H1 (cell line): ENCODE measurements at regions of chrX and their contacts with region 1.

Region 1: DNA sequence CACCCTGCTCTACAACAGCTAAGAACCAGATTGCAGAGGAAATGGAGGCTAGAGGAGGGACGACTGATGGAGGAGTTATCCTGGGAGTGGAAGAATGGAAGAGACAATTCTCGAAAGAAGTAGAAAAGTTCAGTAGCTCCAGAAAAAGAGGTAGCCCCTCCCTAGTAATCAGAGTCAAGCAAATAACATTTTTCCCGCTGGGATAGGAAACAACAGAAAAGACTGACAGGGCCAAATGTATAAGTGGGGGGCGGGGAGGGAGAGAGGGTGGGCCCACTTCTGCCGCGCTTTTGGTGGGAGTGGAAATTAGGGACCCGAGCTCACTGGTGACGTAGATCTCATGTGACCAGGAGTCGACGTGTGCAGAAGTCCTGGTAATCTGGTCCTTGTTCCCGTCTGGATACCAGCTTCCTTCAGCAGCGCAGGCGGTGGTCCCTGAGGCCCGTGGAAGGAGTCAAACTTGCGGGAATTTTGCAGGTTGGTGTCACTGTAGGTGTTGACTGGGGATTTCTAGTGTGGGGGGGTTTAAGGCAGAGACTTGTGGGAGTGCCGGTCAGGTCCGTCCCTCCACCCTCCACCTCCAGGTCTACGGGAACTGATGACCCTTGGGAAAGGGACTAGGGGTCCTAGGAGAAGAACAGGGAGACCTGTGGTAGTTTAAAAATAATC is at the start of gene TCEAL9:
- DNase-seq: no peak
- H3K4me3 ChIP-seq: peak within 1 kb of the TSS; percentile 72 to 94 (median 81)
- H3K27ac ChIP-seq: peak within 1 kb of the TSS; percentile 70; the same call in 1 of the 2 replicates
- H3K4me1 ChIP-seq: no peaks in the 10 kb centered on the region
- H3K27me3 ChIP-seq: no peaks in the 10 kb centered on the region
- CTCF ChIP-seq: no peak
- EP300 ChIP-seq: no peak
- POLR2A ChIP-seq: peak; percentile 53 to 69
- RAD21 ChIP-seq: no peak
- total RNA-seq, gene TCEAL9: 36.5 and 36.8 TPM in 2 replicates

Region 2: GRCh38 chrX:103240155-103240554 is 116.1 kb before region 1 on chrX:
- CTCF ChIA-PET with region 1: no interaction called
- POLR2A ChIA-PET with region 1: no interaction called
- DNase-seq: no peak
- H3K4me3 ChIP-seq: no peak overlapping the region
- H3K27ac ChIP-seq: no peak overlapping the region
- H3K4me1 ChIP-seq: no peaks in the 10 kb centered on the region
- H3K27me3 ChIP-seq: no peaks in the 10 kb centered on the region
- CTCF ChIP-seq: no peak
- EP300 ChIP-seq: no peak
- POLR2A ChIP-seq: no peak
- RAD21 ChIP-seq: no peak

Region 3: GRCh38 chrX:103343105-103343504 is 13.2 kb before region 1 on chrX:
- CTCF ChIA-PET with region 1: no interaction called
- POLR2A ChIA-PET with region 1: interaction called, 12 read pairs
- DNase-seq: no peak
- H3K4me3 ChIP-seq: no peak overlapping the region
- H3K27ac ChIP-seq: no peak overlapping the region
- H3K4me1 ChIP-seq: no peaks in the 10 kb centered on the region; a peak in 3 of 7 replicates
- H3K27me3 ChIP-seq: no peaks in the 10 kb centered on the region
- CTCF ChIP-seq: peak in 2 of 3 experiments; percentile 29 to 52; a peak in 2 of 4 replicates
- EP300 ChIP-seq: no peak
- POLR2A ChIP-seq: no peak
- RAD21 ChIP-seq: peak; percentile 46 to 50

Region 4: GRCh38 chrX:103367502-103367901 is 11.2 kb after region 1 on chrX:
- CTCF ChIA-PET with region 1: no interaction called
- POLR2A ChIA-PET with region 1: interaction called, 13 read pairs
- DNase-seq: no peak
- H3K4me3 ChIP-seq: no peak overlapping the region
- H3K27ac ChIP-seq: no peak overlapping the region
- H3K4me1 ChIP-seq: peaks cover 0 to 2% (median 0%) of the 10 kb centered on the region in 4 experiments; a peak in 1 of 7 replicates
- H3K27me3 ChIP-seq: no peaks in the 10 kb centered on the region
- CTCF ChIP-seq: no peak
- EP300 ChIP-seq: no peak
- POLR2A ChIP-seq: no peak
- RAD21 ChIP-seq: no peak

Region 5: GRCh38 chrX:103376118-103376978 is 20.1 kb after region 1 on chrX and contains the start of gene BEX3:
- CTCF ChIA-PET with region 1: interaction called, 6 read pairs
- POLR2A ChIA-PET with region 1: interaction called, 30 read pairs
- DNase-seq: peak; percentile 56 to 70
- H3K4me3 ChIP-seq: peak within 1 kb of the TSS; percentile 65 to 86 (median 69)
- H3K27ac ChIP-seq: peak within 1 kb of the TSS; percentile 92
- H3K4me1 ChIP-seq: peaks cover 0 to 2% (median under 1%) of the 10 kb centered on the region in 4 experiments; a peak in 4 of 7 replicates
- H3K27me3 ChIP-seq: no peaks in the 10 kb centered on the region
- CTCF ChIP-seq: no peak
- EP300 ChIP-seq: no peak
- POLR2A ChIP-seq: peak; percentile 85 to 98
- RAD21 ChIP-seq: peak; percentile 7 to 14; a peak in 2 of 4 replicates
- total RNA-seq, gene BEX3: 310 and 330 TPM in 2 replicates

Region 6: GRCh38 chrX:103404231-103405208 is 48.3 kb after region 1 on chrX:
- CTCF ChIA-PET with region 1: no interaction called
- POLR2A ChIA-PET with region 1: interaction called, 12 read pairs
- DNase-seq: peak; percentile 29 to 68
- H3K4me3 ChIP-seq: peak overlapping the region; percentile 74 to 96 (median 84)
- H3K27ac ChIP-seq: peak overlapping the region; percentile 75; the same call in 1 of the 2 replicates
- H3K4me1 ChIP-seq: no peaks in the 10 kb centered on the region
- H3K27me3 ChIP-seq: peaks cover 0 to 15% (median 3%) of the 10 kb centered on the region in 4 experiments; a peak in 3 of 7 replicates
- CTCF ChIP-seq: no peak
- EP300 ChIP-seq: no peak
- POLR2A ChIP-seq: peak in 1 of 2 experiments; percentile 58; a peak in 1 of 3 replicates
- RAD21 ChIP-seq: no peak